Activated T-helper 2 cell treated with anti-CD3 and anti-CD28 coated beads, Interferon-gamma antibody, Interleukin-2, Interleukin-4, amounts not matched to agents 10 μg/mL and 5 μg/mL and 100 μg/mL, durations not matched to agents 14 hours and 24 hours and 36 hours (primary cell): ENCODE measurements at regions of chr7 and their contacts with region 1.

Region 1: GRCh38 chr7:132569884-132570614 is 6.2 kb downstream of the PLXNA4 start:
- DNase-seq: no peak
- H3K4me3 Mint-ChIP-seq: no peak overlapping the region
- H3K27ac Mint-ChIP-seq: no peak overlapping the region
- H3K4me1 Mint-ChIP-seq: peaks cover 14% of the 10 kb centered on the region
- H3K27me3 Mint-ChIP-seq: peaks cover 86% of the 10 kb centered on the region

Region 2: GRCh38 chr7:132410385-132410784 is 159.7 kb before region 1 on chr7:
- intact Hi-C with region 1: loop called (anchors 5 kb)
- DNase-seq: no peak
- H3K4me3 Mint-ChIP-seq: no peak overlapping the region
- H3K27ac Mint-ChIP-seq: no peak overlapping the region
- H3K4me1 Mint-ChIP-seq: peaks cover 2% of the 10 kb centered on the region
- H3K27me3 Mint-ChIP-seq: peaks cover 17% of the 10 kb centered on the region

Region 3: DNA sequence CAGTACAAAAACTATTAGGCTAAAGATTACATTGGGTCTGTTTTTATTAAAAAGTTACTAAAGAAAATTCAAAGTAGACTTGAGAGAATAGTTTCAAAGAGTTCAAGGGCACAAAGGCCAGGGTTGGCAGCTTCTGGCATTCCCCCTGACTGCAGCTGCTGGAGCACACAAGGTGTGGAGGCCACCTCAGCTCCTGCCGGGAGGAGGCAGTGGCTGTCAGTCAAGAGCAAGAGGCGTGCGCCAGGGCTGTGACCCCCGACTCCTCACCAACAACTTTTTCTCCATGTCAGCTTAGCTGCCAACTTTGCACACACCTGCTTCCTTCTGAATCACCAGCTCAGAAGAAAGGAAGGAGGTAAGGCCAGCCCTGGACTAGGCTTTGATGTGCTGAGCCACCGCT is 150.8 kb after region 1 on chr7:
- intact Hi-C with region 1: no loop called
- DNase-seq: no peak
- H3K4me3 Mint-ChIP-seq: no peak overlapping the region
- H3K27ac Mint-ChIP-seq: no peak overlapping the region
- H3K4me1 Mint-ChIP-seq: no peaks in the 10 kb centered on the region
- H3K27me3 Mint-ChIP-seq: no peaks in the 10 kb centered on the region